Right ventricle myocardium superior (tissue), 1 donor: ENCODE measurements at regions of chr9 and their contacts with region 1.

Region 1: GRCh38 chr9:92716557-92716956 is 46.6 kb upstream of the IPPK start:
- DNase-seq: peak; percentile 78
- ATAC-seq: peak; percentile 57

Region 2: GRCh38 chr9:92561374-92562330 is 154.9 kb before region 1 on chr9:
- intact Hi-C with region 1: no loop called
- DNase-seq: no peak
- ATAC-seq: no peak

Region 3: DNA sequence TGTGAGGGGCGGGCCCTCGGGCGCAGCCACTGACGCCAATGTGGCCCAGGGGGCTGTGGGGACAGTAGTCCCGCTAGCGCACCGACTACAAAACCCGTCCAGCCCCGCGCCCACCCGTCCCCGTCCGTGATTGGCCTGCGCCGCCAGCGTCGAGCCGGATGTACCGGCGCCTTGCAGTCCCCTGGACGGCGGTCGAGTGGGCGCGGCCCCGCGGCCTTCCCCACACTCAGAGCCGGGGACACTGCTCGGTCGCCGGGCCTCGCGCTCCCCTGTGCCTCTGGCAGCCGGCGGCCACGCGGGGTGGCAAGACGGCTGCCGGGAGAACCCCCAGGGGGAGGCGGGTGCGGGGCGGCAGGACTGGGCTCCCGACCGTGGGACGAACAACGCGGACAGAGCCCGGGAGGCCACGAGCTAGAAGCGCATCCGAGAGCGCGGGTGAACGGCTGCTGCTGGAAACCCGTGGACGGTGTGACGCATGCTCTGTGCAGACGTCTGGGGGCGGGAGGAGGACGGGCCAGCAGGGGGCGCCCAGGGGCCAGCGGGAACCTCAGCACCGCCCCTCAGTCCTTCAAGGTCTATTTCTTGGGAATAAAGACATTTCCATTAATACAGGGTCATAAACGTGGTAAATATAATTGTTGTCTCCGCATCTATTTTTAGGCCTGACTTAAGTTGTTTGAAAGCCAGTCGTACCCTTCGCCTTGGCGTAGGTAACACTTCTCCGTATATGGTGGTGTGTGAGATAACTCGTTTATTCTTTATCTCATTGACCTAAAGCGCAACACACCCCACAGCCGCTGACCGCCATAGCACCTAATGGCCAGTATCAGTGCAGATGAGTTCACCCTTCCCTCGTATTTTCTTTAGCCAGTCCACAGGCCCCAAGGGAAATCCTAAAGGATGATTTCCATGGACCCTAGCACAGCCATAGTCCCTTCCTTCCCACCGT is 48.7 kb after region 1 on chr9:
- intact Hi-C with region 1: loop called (anchors 10 kb)
- DNase-seq: peak; percentile 99
- ATAC-seq: peak; percentile 95

Region 4: GRCh38 chr9:92790542-92791527 is 74.3 kb after region 1 on chr9:
- intact Hi-C with region 1: loop called (anchors 5 kb)
- DNase-seq: peak; percentile 82
- ATAC-seq: peak; percentile 99